Body of pancreas (tissue), 4 donors: ENCODE measurements at regions of chr2 and their contacts with region 1.

Region 1: GRCh38 chr2:196080526-196080925 is 11.9 kb upstream of the DNAH7 start:
- DNase-seq: no peak
- ATAC-seq: no peak
- H3K4me3 ChIP-seq: no peak overlapping the region
- H3K27ac ChIP-seq: no peak overlapping the region
- H3K4me1 ChIP-seq: peaks cover 18% of the 10 kb centered on the region
- H3K27me3 ChIP-seq: no peaks in the 10 kb centered on the region
- CTCF ChIP-seq: no peak
- POLR2A ChIP-seq: no peak

Region 2: DNA sequence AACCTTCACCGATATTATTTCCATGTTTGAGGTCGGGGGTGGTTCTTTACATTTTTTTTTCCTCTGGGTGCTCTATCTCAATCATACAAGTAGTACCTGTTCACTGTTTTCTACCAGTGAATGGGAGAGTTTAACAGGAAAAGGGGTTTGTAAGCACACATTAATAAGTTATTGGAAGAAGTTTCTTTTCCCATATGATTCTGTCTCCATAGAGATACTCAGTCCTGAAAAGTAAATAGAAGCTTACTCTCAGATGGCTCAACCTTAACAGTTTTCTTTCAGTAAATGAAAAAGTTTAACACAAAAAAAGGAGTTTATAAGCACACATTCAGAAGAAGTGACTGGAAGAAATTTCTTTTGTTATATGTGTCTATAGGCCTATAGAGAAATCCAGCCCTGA is 1419.1 kb before region 1 on chr2:
- intact Hi-C with region 1: no loop called
- DNase-seq: no peak
- ATAC-seq: no peak
- H3K4me3 ChIP-seq: no peak overlapping the region
- H3K27ac ChIP-seq: no peak overlapping the region
- H3K4me1 ChIP-seq: no peaks in the 10 kb centered on the region
- H3K27me3 ChIP-seq: no peaks in the 10 kb centered on the region
- CTCF ChIP-seq: no peak
- POLR2A ChIP-seq: no peak

Region 3: GRCh38 chr2:195543902-195544894 is 536.3 kb before region 1 on chr2:
- intact Hi-C with region 1: no loop called
- DNase-seq: no peak
- ATAC-seq: peak; percentile 74
- H3K4me3 ChIP-seq: no peak overlapping the region
- H3K27ac ChIP-seq: peak overlapping the region in 3 of 4 donors; percentile 21 to 64 (median 48)
- H3K4me1 ChIP-seq: peaks cover 10% of the 10 kb centered on the region
- H3K27me3 ChIP-seq: no peaks in the 10 kb centered on the region
- CTCF ChIP-seq: no peak
- POLR2A ChIP-seq: no peak

Region 4: DNA sequence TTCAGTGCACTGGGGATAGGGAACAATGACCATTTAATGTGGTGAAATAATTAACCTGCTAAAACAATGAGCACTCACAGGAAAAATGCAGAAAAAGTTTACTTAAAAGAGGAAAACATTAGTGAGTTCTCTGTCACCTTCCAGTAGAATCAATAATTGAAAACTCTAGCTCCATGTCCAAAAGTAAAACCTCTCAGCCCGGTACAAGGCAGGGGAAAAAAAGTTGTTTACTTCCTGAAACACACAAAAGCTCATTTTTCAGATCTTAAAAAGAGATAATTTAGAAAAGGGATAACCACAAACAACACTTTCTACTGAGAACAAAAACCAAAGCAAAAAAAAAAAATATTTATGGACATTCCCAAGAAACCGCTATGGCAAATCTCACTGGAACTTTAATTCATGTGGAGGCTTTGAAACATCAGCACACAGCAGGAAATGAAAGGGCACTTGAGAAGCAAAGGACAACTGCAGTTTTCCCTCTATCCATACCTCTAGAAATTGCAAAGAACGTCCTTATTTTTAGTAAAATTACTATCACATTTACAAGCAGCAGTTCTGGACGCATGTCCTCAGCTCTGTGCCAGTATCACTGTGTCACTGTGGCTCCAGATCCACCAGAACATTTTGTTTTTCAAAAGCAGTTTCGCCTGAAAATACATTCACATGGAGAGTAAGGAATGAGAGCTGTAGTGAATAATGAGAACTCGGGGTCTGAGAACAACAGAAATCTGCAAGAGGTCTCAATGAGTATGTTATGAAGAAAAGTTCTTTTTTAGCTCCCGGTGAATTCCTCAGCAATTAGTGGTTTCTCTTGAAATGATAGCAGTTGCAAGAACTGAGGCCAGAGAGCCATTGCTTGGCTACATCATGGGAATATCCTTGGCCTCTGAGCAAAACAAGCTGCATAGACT is 32.8 kb after region 1 on chr2:
- intact Hi-C with region 1: no loop called
- DNase-seq: peak in 1 of 4 donors; percentile 13
- ATAC-seq: peak; percentile 78
- H3K4me3 ChIP-seq: no peak overlapping the region
- H3K27ac ChIP-seq: peak overlapping the region in 3 of 4 donors; percentile 55 to 79 (median 76)
- H3K4me1 ChIP-seq: peaks cover 13% of the 10 kb centered on the region
- H3K27me3 ChIP-seq: no peaks in the 10 kb centered on the region
- CTCF ChIP-seq: no peak
- POLR2A ChIP-seq: no peak

Region 5: DNA sequence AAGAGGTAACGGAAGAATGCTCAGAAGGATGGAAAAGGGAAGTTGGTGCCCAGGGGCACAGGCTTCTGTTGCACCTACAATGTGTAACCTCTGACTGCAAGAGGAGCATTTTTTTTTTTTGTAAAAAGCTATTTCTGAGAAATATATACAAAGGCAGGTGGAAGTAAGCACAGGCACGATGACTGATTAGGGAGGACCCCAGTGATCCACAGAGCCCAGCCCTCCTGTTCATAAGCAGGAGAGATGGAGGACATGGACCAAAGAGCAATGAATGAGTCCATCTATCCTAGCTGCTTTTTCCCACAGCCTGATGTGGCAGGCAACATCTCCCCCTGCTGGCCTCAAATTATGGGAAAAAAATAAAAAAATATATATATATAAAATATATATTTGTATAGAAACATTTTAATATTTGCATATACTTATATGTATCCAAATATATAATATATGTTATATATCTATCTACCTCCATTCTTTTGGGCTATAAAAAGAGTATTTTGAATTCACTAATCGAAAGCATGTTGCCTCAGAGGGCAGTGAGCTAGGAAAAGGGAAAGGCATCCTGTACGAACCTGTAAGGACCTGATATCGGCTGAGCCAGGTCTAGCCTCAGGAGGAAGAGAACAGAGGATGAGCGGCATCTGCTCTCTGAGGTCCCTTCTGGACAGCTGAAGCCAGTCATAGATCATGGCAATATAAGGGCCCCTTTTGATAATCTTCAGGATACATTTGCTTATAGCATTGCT is 256.9 kb after region 1 on chr2:
- intact Hi-C with region 1: loop called (anchors 5 kb)
- DNase-seq: no peak
- ATAC-seq: no peak
- H3K4me3 ChIP-seq: no peak overlapping the region
- H3K27ac ChIP-seq: no peak overlapping the region
- H3K4me1 ChIP-seq: no peaks in the 10 kb centered on the region
- H3K27me3 ChIP-seq: no peaks in the 10 kb centered on the region
- CTCF ChIP-seq: peak in 6 of 7 experiments; percentile 16 to 40 (median 30)
- POLR2A ChIP-seq: no peak